Caco-2 (cell line): ENCODE measurements at regions of chr11 and their contacts with region 1.

Region 1: DNA sequence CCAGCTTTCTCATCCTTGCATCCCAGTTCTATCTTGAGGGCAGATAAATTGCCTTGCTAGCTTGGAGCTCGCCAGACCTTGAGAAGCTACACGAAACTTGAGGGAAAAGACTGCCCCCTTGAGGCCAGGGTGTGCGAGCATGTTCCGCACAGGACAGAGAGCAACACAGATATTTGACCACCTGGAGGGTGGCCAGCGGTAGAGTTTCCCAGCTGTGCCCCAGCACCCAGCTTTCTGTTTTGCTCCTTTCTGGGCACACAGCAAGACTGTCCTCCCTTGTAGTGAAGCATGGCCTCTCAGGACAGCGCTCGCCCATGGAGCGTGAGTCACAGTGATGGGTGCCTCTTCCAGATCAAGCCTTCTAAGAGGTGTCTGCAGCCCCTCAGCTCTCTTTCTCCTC is 23.5 kb downstream of the SPATA19 start:
- DNase-seq: peak; percentile 63 to 72
- H3K4me3 ChIP-seq: no peak overlapping the region
- H3K4me3 Mint-ChIP-seq: no peak overlapping the region
- H3K27ac Mint-ChIP-seq: no peak overlapping the region
- H3K4me1 ChIP-seq: no peaks in the 10 kb centered on the region
- H3K4me1 Mint-ChIP-seq: no peaks in the 10 kb centered on the region
- H3K27me3 ChIP-seq: no peaks in the 10 kb centered on the region
- H3K27me3 Mint-ChIP-seq: peaks cover 17% of the 10 kb centered on the region
- CTCF ChIP-seq: peak; percentile 72 to 80

Region 2: DNA sequence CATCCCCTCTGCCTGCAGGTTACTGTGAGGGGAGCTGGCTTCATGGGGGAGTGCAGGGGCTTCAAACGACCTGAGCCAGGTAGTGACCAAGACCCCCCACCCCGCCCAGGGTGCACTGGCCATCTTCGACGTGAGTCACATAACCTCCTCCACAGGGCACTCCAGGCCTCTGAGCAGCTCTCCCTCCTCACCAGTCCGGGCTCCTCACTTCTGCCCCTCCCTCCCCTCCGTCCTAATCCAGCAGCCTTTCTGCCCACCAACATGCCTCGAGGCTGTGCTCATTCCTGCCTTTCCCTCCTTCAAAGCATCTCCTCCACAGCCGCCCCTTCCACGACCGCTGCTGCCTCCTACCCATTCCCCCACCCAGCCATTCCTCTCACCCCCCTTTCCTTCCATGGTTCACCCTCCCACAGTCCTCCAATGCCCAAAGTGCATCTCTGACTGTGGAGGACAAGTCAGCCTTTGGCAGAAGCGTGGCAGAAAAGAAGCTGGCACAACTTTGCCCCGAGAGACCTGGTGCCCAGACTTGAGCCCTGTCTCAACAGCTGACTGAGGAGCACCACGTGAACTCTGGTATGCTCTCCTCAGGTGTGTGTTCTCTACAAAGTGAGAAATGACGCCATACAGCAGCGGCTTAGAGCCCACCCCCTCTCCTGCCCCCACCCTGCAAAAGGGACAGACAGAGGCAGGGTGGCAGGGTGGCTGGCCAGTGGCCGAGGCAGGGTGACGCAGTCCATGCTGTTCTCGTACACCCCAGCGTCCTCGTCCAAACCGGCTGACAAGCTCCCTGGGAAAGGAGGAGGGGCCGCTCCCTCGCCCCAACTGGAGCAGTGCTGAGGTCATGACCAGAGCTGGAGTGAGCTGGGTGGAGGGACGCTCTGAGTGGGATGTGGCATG is 319.9 kb before region 1 on chr11:
- CTCF ChIA-PET with region 1: no interaction called
- POLR2A ChIA-PET with region 1: no interaction called
- intact Hi-C with region 1: loop called (anchors 5 kb)
- DNase-seq: no peak
- H3K4me3 ChIP-seq: no peak overlapping the region
- H3K4me3 Mint-ChIP-seq: no peak overlapping the region
- H3K27ac Mint-ChIP-seq: no peak overlapping the region
- H3K4me1 ChIP-seq: no peaks in the 10 kb centered on the region
- H3K4me1 Mint-ChIP-seq: no peaks in the 10 kb centered on the region
- H3K27me3 ChIP-seq: no peaks in the 10 kb centered on the region
- H3K27me3 Mint-ChIP-seq: peaks cover 21% of the 10 kb centered on the region
- CTCF ChIP-seq: no peak